Left colon (tissue), 2 donors: ENCODE measurements at regions of chr6 and their contacts with region 1.

Region 1: GRCh38 chr6:149934249-149935156 is 7.3 kb upstream of the ULBP2 start:
- DNase-seq: peak in 1 of 2 donors; percentile 73
- ATAC-seq: peak; percentile 70

Region 2: GRCh38 chr6:150004783-150005717 is 70.5 kb after region 1 on chr6:
- intact Hi-C with region 1: loop called in 1 of 2 experiments (anchors 10 kb)
- DNase-seq: peak; percentile 91 to 95
- ATAC-seq: peak; percentile 98

Region 3: GRCh38 chr6:150018846-150019580 is 84.5 kb after region 1 on chr6:
- intact Hi-C with region 1: loop called in 1 of 2 experiments (anchors 2 kb)
- DNase-seq: no peak
- ATAC-seq: no peak